ENCODE measurements at regions of chr17 and their contacts with region 1.

Region 1: GRCh38 chr17:49707608-49708514 is at the start of gene SLC35B1:
- DNase-seq: peak; percentile 93 to 99
- H3K4me3 ChIP-seq: peak within 1 kb of the TSS; percentile 80 to 90
- H3K27ac ChIP-seq: peak within 1 kb of the TSS; percentile 83 to 93
- H3K4me1 ChIP-seq: peaks cover 6 to 17% of the 10 kb centered on the region in 2 donors
- H3K27me3 ChIP-seq: no peaks in the 10 kb centered on the region
- CTCF ChIP-seq: peak; percentile 76 to 87 (median 82)
- total RNA-seq, gene SLC35B1: 123 TPM

Region 2: GRCh38 chr17:49404361-49404760 is 303.5 kb before region 1 on chr17:
- intact Hi-C with region 1: no loop called
- DNase-seq: no peak
- H3K4me3 ChIP-seq: no peak overlapping the region
- H3K27ac ChIP-seq: no peak overlapping the region
- H3K4me1 ChIP-seq: no peaks in the 10 kb centered on the region
- H3K27me3 ChIP-seq: no peaks in the 10 kb centered on the region
- CTCF ChIP-seq: no peak

Region 3: DNA sequence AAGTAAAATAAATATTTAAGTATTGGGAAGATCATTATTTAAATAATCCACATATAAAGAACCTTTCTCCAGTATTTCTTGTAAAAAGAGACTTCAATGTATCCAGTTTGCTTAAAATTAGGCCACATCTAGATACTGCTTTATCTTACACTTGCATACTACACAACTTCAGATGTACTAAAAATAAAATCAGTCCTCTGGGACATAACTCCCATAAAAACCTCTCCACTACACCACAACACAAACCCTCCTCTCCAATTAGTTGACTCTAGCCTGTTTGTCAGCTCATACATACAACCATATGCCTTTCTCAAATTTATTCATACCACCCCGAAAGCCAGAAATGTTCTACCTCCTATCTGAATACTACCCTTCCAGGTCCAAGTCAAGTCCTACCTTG is 51.6 kb before region 1 on chr17:
- intact Hi-C with region 1: no loop called
- DNase-seq: no peak
- H3K4me3 ChIP-seq: no peak overlapping the region
- H3K27ac ChIP-seq: peak overlapping the region; percentile 27 to 30
- H3K4me1 ChIP-seq: peaks cover 0 to 22% of the 10 kb centered on the region in 2 donors
- H3K27me3 ChIP-seq: no peaks in the 10 kb centered on the region
- CTCF ChIP-seq: no peak

Region 4: GRCh38 chr17:49687878-49688491 is 19.9 kb before region 1 on chr17:
- intact Hi-C with region 1: no loop called
- DNase-seq: peak in 1 of 2 donors; percentile 68
- H3K4me3 ChIP-seq: no peak overlapping the region
- H3K27ac ChIP-seq: peak overlapping the region; percentile 95
- H3K4me1 ChIP-seq: peaks cover 3 to 48% of the 10 kb centered on the region in 2 donors
- H3K27me3 ChIP-seq: no peaks in the 10 kb centered on the region
- CTCF ChIP-seq: no peak

Region 5: DNA sequence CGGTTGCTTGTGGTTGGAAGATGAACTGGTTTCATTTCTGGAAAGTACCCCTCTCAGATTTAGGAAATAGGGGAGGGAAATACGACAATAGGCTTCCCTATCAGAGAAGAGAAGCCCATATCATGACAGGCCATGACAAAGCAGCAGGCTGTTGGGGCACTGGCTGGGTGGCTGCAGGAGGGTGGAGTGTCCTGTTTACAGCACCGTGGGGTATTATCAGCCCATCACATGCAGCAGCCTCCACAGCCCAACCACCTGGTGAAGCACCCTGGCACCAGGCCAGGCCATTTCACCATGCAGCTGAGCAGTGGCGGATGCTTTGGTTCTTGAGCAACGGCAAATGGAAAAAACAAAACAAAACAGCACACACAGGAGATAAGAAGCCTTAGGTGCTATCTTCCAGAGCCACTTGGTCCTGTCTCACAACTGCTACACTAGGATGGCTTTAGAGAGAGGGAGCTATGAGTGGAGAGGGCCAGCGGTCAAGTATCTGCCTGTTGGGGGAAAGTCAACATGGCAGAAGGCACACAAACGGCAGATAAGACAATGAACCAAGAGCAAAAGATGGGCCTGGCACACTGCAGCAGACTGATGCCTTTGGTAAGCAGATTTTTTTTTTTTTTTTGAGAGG is 31.9 kb after region 1 on chr17:
- intact Hi-C with region 1: loop called (anchors 1 kb)
- DNase-seq: peak; percentile 61 to 85
- H3K4me3 ChIP-seq: no peak overlapping the region
- H3K27ac ChIP-seq: peak overlapping the region; percentile 89 to 94
- H3K4me1 ChIP-seq: peaks cover 21 to 46% of the 10 kb centered on the region in 2 donors
- H3K27me3 ChIP-seq: no peaks in the 10 kb centered on the region
- CTCF ChIP-seq: no peak

Region 6: GRCh38 chr17:49763735-49764558 is 56.1 kb after region 1 on chr17 and contains the start of gene FAM117A:
- intact Hi-C with region 1: loop called (anchors 2 kb)
- DNase-seq: peak; percentile 96 to 98
- H3K4me3 ChIP-seq: peak within 1 kb of the TSS; percentile 89 to 98
- H3K27ac ChIP-seq: peak within 1 kb of the TSS; percentile 5 to 84
- H3K4me1 ChIP-seq: peaks cover 0 to 5% of the 10 kb centered on the region in 2 donors
- H3K27me3 ChIP-seq: no peaks in the 10 kb centered on the region
- CTCF ChIP-seq: no peak
- total RNA-seq, gene FAM117A: 25.4 TPM

Region 7: DNA sequence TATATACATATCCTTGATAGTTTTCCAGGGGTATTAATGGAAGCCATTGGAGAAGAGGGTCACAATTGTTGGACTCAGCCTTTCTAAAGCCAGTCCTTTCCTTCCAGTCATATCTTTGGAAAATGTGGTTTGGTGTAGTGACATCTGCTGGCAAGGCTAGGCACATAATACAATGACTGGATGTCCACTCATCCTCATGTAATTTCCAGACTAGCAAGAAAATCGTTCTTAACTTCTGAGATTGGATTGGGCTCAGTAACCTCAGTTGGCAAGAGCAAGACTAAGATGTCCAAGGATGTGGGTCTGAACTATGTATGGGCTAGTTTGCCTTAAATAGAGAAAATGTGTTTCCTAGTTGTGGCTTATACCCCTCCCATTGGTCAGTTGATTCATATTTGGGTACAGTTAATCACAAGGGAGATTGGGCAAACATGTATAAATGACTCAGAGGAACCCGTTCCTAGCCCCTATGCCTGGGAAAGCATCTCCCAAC is 71.9 kb after region 1 on chr17:
- intact Hi-C with region 1: loop called (anchors 1 kb)
- DNase-seq: peak in 1 of 2 donors; percentile 75
- H3K4me3 ChIP-seq: no peak overlapping the region
- H3K27ac ChIP-seq: peak overlapping the region; percentile 81 to 87
- H3K4me1 ChIP-seq: peaks cover 29 to 59% of the 10 kb centered on the region in 2 donors
- H3K27me3 ChIP-seq: no peaks in the 10 kb centered on the region
- CTCF ChIP-seq: peak; percentile 48 to 72 (median 63)

Region 8: GRCh38 chr17:49788478-49789242 is 80.8 kb after region 1 on chr17 and contains the start of gene KAT7:
- intact Hi-C with region 1: loop called (anchors 1 kb)
- DNase-seq: peak; percentile 98 to 99
- H3K4me3 ChIP-seq: peak within 1 kb of the TSS; percentile 93 to 98
- H3K27ac ChIP-seq: peak within 1 kb of the TSS; percentile 100
- H3K4me1 ChIP-seq: peaks cover 10 to 34% of the 10 kb centered on the region in 2 donors
- H3K27me3 ChIP-seq: no peaks in the 10 kb centered on the region
- CTCF ChIP-seq: no peak
- total RNA-seq, gene KAT7: 46.6 TPM

Region 9: GRCh38 chr17:49851387-49852291 is 143.8 kb after region 1 on chr17:
- intact Hi-C with region 1: loop called (anchors 2 kb)
- DNase-seq: peak in 1 of 2 donors; percentile 85
- H3K4me3 ChIP-seq: peak overlapping the region; percentile 74 to 77
- H3K27ac ChIP-seq: peak overlapping the region; percentile 29 to 37
- H3K4me1 ChIP-seq: peaks cover 0 to 6% of the 10 kb centered on the region in 2 donors
- H3K27me3 ChIP-seq: no peaks in the 10 kb centered on the region
- CTCF ChIP-seq: peak; percentile 68 to 93 (median 88)

Region 10: GRCh38 chr17:49997791-49998703 is 290.2 kb after region 1 on chr17:
- intact Hi-C with region 1: loop called (anchors 5 kb)
- DNase-seq: peak; percentile 20 to 83
- H3K4me3 ChIP-seq: no peak overlapping the region
- H3K27ac ChIP-seq: no peak overlapping the region
- H3K4me1 ChIP-seq: peaks cover 11 to 16% of the 10 kb centered on the region in 2 donors
- H3K27me3 ChIP-seq: peaks cover 30% of the 10 kb centered on the region
- CTCF ChIP-seq: peak; percentile 91 to 96 (median 92)

Region 11: GRCh38 chr17:50218771-50219315 is 511.0 kb after region 1 on chr17:
- intact Hi-C with region 1: no loop called
- DNase-seq: no peak
- H3K4me3 ChIP-seq: no peak overlapping the region
- H3K27ac ChIP-seq: peak overlapping the region; percentile 87 to 90
- H3K4me1 ChIP-seq: peaks cover 21 to 55% of the 10 kb centered on the region in 2 donors
- H3K27me3 ChIP-seq: no peaks in the 10 kb centered on the region
- CTCF ChIP-seq: no peak